ENCODE measurements at regions of chr10 and their contacts with region 1.

Region 1: GRCh38 chr10:110803830-110804338 is 67.8 kb upstream of the PDCD4 start:
- DNase-seq: peak; percentile 70
- CTCF ChIP-seq: peak; percentile 83

Region 2: DNA sequence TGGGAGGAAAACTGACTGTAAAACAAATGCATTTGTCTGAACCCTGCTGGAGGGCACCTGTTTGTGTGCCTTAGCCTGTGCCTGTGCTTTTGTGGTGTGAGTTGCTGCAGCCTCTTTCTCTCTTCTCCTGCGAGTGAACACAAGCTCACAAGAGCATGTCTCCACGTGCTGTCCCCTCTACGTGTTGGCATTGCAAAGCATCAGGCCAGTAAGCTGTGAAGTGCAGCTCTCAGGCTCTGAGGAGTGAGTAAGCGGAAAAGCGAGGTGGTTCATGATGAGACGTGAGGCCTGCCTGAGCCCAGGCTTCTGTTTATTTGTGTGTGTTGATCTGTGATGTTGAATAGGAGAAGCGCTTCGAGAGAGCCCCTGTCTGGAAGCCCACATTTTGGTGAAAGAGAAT is 17.7 kb before region 1 on chr10:
- CTCF ChIA-PET with region 1: interaction called, 21 read pairs
- POLR2A ChIA-PET with region 1: interaction called, 4 read pairs
- DNase-seq: no peak
- CTCF ChIP-seq: no peak

Region 3: GRCh38 chr10:110827410-110827809 is 23.5 kb after region 1 on chr10:
- CTCF ChIA-PET with region 1: interaction called, 55 read pairs
- POLR2A ChIA-PET with region 1: no interaction called
- DNase-seq: no peak
- CTCF ChIP-seq: no peak

Region 4: DNA sequence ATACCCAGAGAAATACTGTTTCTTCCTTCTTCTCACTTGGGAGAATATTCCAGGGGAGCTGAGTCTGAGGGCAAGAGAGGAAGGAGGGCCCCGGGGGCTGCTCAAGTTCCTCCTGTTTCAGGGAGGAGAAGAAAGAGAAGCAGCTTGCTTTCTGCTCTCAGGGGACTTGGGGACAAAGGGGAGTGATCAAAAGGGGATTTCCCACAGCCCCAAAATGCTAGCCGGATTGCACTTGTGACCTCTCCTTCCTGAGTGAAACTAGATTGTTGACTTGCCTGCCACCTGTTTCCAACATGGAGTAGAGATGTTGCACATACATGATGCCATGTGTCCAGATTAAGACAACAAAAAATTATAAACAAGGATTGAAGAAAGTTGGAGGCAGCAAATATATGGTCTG is 39.1 kb after region 1 on chr10:
- CTCF ChIA-PET with region 1: interaction called, 22 read pairs
- POLR2A ChIA-PET with region 1: interaction called, 8 read pairs
- DNase-seq: peak; percentile 83
- CTCF ChIP-seq: no peak

Region 5: GRCh38 chr10:110857265-110858158 is 53.6 kb after region 1 on chr10:
- CTCF ChIA-PET with region 1: interaction called, 11 read pairs
- POLR2A ChIA-PET with region 1: interaction called, 3 read pairs
- DNase-seq: no peak
- CTCF ChIP-seq: no peak

Region 6: DNA sequence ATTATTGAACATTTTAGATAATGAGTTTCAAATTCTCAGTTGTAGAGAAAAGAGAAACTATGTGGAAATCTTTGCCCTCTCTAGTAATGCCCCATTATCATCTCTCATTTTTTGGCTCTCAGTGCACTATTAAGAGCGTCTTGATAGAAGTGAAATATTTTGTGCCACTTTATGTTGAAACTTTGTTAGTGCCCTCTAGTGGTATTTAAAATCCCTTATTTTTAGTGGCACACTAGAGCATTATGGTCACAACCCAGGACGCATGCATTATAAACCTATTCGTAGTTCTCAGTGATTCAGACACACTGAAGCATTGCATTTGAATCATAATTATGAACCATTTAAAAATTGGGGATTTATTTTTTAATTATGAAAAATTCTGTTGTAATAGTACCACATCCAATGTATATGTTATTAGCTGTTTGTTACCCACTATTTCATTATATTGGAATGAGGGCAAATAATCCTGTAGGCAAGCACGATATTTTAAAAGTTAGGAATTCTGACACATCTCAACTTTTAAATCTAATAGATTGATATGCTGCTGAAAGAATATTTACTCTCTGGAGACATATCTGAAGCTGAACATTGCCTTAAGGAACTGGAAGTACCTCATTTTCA is 89.8 kb after region 1 on chr10:
- CTCF ChIA-PET with region 1: interaction called, 17 read pairs
- POLR2A ChIA-PET with region 1: no interaction called
- DNase-seq: peak; percentile 28
- CTCF ChIP-seq: peak; percentile 39

Measured in GM10248 (cell line).